Activated CD4-positive, alpha-beta memory T cell treated with anti-CD3 and anti-CD28 coated beads for 36 hours (primary cell): ENCODE measurements at regions of chr3 and their contacts with region 1.

Region 1: GRCh38 chr3:106428565-106428994 is 559.8 kb upstream of the CBLB start:
- DNase-seq: peak; percentile 72
- H3K4me3 Mint-ChIP-seq: no peak overlapping the region
- H3K27ac Mint-ChIP-seq: peak overlapping the region; percentile 99
- H3K4me1 Mint-ChIP-seq: peaks cover 53% of the 10 kb centered on the region
- H3K27me3 Mint-ChIP-seq: no peaks in the 10 kb centered on the region

Region 2: GRCh38 chr3:105676621-105677300 is 751.8 kb before region 1 on chr3:
- CTCF ChIA-PET with region 1: no interaction called
- POLR2A ChIA-PET with region 1: no interaction called
- intact Hi-C with region 1: loop called (anchors 1 kb)
- DNase-seq: peak; percentile 77
- H3K4me3 Mint-ChIP-seq: no peak overlapping the region
- H3K27ac Mint-ChIP-seq: peak overlapping the region; percentile 86
- H3K4me1 Mint-ChIP-seq: peaks cover 9% of the 10 kb centered on the region
- H3K27me3 Mint-ChIP-seq: no peaks in the 10 kb centered on the region

Region 3: DNA sequence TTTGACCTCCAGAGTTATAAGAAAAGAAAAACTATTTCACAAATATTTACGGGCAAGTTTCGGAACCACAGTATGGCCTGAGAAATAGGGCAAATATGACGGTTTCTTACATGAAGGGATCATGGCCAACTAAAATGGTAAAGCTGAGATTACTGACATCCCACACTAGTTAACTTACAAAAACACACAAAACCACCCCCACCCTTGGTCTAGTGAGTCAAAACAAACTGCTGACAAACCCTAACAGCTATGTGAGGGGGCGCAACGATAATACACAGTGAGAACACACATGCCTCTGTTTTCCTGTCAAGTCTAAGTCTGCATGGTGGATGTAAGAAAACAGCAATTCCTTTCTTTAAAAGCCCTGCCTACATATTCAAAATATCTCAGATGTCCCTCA is 592.0 kb before region 1 on chr3:
- CTCF ChIA-PET with region 1: no interaction called
- POLR2A ChIA-PET with region 1: interaction called, 6 read pairs
- intact Hi-C with region 1: loop called (anchors 2 kb)
- DNase-seq: peak; percentile 78
- H3K4me3 Mint-ChIP-seq: peak overlapping the region; percentile 58
- H3K27ac Mint-ChIP-seq: peak overlapping the region; percentile 80
- H3K4me1 Mint-ChIP-seq: peaks cover 74% of the 10 kb centered on the region
- H3K27me3 Mint-ChIP-seq: no peaks in the 10 kb centered on the region

Region 4: GRCh38 chr3:106103383-106103782 is 325.2 kb before region 1 on chr3:
- CTCF ChIA-PET with region 1: no interaction called
- POLR2A ChIA-PET with region 1: no interaction called
- intact Hi-C with region 1: no loop called
- DNase-seq: no peak
- H3K4me3 Mint-ChIP-seq: no peak overlapping the region
- H3K27ac Mint-ChIP-seq: no peak overlapping the region
- H3K4me1 Mint-ChIP-seq: no peaks in the 10 kb centered on the region
- H3K27me3 Mint-ChIP-seq: no peaks in the 10 kb centered on the region

Region 5: GRCh38 chr3:106176734-106177133 is 251.8 kb before region 1 on chr3:
- CTCF ChIA-PET with region 1: no interaction called
- POLR2A ChIA-PET with region 1: interaction called, 3 read pairs
- intact Hi-C with region 1: loop called (anchors 1 kb)
- DNase-seq: peak; percentile 76
- H3K4me3 Mint-ChIP-seq: peak overlapping the region; percentile 51
- H3K27ac Mint-ChIP-seq: peak overlapping the region; percentile 87
- H3K4me1 Mint-ChIP-seq: peaks cover 58% of the 10 kb centered on the region
- H3K27me3 Mint-ChIP-seq: no peaks in the 10 kb centered on the region

Region 6: DNA sequence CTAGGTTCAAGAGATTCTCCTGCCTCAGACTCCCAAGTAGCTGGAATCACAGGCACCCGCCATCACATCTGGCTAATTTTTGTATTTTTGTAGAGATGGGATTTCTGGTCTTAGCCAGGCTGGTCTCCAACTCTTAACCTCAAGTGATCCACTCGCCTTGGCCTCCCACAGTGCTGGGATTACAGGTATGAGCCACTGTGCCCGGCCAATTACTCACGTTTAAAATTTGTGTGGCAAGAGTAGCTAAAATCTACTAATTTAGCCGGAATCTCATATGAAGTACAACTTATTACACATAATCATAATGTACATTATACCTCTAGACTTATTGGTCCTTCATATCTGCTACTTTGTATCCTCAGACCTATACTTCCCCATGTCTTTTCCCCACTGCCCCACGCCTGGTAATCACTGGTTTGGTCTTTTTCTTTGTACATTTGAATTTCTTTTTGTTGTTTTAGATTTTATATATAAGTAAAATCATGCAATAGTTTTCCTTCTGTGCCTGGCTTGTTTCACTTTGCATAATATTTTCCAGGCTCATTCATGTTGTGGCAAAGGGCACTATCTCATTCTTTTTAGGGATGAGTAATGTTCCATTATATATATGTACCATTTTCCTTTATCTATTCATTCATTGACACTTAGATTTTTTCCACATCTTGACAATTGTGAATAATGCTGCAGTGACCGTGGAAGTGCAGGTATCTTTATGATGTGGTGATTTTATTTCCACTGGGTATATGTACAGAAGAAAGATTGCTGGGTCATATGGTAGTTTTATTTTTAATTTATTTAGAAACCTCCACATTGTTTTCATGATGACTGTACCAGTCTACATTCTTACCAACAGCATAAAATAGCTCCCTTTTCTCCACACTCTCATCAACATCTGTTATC is 45.2 kb after region 1 on chr3:
- CTCF ChIA-PET with region 1: interaction called, 6 read pairs
- POLR2A ChIA-PET with region 1: interaction called, 16 read pairs
- intact Hi-C with region 1: loop called (anchors 1 kb)
- DNase-seq: peak; percentile 53
- H3K4me3 Mint-ChIP-seq: no peak overlapping the region
- H3K27ac Mint-ChIP-seq: peak overlapping the region; percentile 71
- H3K4me1 Mint-ChIP-seq: peaks cover 19% of the 10 kb centered on the region
- H3K27me3 Mint-ChIP-seq: no peaks in the 10 kb centered on the region

Region 7: GRCh38 chr3:106609666-106610301 is 181.2 kb after region 1 on chr3:
- CTCF ChIA-PET with region 1: interaction called, 10 read pairs
- POLR2A ChIA-PET with region 1: interaction called, 4 read pairs
- intact Hi-C with region 1: loop called (anchors 2 kb)
- DNase-seq: peak; percentile 76
- H3K4me3 Mint-ChIP-seq: no peak overlapping the region
- H3K27ac Mint-ChIP-seq: peak overlapping the region; percentile 67
- H3K4me1 Mint-ChIP-seq: peaks cover 23% of the 10 kb centered on the region
- H3K27me3 Mint-ChIP-seq: no peaks in the 10 kb centered on the region